Psoas muscle (tissue), 8 donors: ENCODE measurements at regions of chr3 and their contacts with region 1.

Region 1: DNA sequence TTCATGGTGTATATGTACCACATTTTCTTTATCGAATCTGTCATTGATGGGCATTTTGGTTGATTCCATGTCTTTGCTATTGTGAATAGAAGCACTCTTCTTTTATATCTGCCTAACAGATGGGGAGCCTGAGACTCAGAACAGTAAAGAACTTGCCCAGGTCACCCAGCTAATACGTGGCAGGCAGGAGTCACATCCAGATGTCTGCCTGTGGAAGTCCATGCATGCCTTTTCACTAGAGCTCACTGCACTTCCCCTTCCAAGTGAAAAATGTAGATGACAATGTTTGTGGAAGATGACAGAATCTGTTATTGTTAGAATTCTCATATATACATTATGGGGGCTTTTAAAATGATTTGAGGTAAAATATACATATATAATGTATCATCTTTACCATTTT is 165.0 kb downstream of the PDZRN3 start:
- DNase-seq: no peak
- ATAC-seq: no peak
- H3K4me3 ChIP-seq: no peak overlapping the region
- H3K27ac ChIP-seq: no peak overlapping the region
- H3K4me1 ChIP-seq: peaks cover 8% of the 10 kb centered on the region
- H3K27me3 ChIP-seq: no peaks in the 10 kb centered on the region
- CTCF ChIP-seq: no peak

Region 2: DNA sequence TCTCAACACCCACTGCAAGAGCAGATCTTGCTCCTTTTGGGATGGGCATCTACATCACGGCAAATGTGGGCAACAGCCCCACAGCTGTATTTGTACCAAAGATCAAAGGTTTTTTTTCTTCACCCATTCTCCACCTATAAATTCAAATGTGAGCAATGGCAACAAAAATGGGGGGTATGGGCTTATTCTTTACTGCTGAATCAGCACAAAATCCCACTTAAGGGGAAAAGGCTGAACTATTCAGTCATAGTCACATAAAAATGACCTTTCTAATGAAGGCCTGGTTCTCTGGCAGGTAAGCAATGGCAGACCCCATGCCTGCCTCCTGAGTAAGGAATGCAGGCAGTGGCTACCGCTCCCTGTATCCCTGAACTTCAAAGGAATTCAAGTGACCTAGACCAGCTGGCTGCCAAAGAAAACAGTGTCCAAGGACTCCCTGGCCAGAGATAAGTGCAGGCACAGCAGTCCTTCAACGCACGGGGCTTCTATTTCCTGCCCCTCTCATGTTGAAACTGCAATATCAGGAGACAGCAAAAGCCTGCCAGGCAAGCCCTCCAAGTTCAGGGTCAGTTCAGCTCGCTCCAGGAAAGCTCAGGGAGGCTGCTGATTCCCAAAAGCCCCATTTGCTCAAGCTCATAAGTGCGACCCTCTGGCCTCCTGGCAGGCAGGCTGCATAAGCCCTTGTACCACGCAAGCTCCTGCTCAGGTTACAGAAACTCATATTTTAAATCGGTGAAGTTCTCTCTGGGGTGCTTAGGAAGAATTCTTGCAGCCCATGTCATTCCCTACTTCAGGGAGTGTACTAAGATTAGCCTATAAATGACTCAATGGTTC is 31.0 kb after region 1 on chr3:
- intact Hi-C with region 1: loop called in 1 of 2 experiments (anchors 5 kb)
- DNase-seq: peak; percentile 23 to 41
- ATAC-seq: peak; percentile 76 to 88 (median 82)
- H3K4me3 ChIP-seq: no peak overlapping the region
- H3K27ac ChIP-seq: peak overlapping the region; percentile 15
- H3K4me1 ChIP-seq: peaks cover 68% of the 10 kb centered on the region
- H3K27me3 ChIP-seq: no peaks in the 10 kb centered on the region
- CTCF ChIP-seq: no peak

Region 3: DNA sequence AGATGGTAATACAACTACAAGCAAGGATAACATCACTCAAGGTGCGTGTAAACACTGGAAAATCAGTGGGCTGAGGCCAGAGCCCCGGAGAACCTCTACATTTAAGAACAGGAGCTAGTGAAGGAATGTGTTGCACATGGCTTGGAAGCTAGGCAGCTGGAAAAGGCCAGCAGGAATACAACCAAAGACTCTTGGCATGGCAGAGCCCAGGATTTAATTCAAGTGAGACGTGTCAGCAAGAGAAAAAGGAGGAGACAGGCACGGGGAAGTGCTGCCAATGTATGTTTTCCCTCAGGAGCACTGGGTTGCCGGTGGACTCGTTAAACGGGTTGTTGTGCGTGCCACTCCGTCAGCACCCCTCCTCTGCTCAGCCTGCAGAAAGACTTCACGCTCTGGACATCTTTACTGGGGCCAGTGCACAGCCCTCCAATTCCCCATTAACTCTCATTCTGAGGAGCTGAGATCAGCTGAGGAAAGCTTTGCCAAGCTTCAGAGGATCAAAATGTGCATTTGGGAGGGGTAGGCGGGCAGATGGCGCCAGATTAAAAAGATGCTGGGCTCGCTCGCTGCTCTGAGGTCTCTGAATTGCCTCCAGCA is 61.3 kb after region 1 on chr3:
- intact Hi-C with region 1: no loop called
- DNase-seq: peak; percentile 33 to 62
- ATAC-seq: peak; percentile 49 to 85 (median 70)
- H3K4me3 ChIP-seq: peak overlapping the region; percentile 49
- H3K27ac ChIP-seq: peak overlapping the region; percentile 73
- H3K4me1 ChIP-seq: peaks cover 26% of the 10 kb centered on the region
- H3K27me3 ChIP-seq: no peaks in the 10 kb centered on the region
- CTCF ChIP-seq: peak; percentile 0